CD4-positive, alpha-beta T cell (primary cell): ENCODE measurements at regions of chr21 and their contacts with region 1.

Region 1: GRCh38 chr21:34974162-34974981 is 74.7 kb downstream of the RUNX1 start:
- DNase-seq: peak in 11 of 14 experiments; percentile 18 to 87 (median 38)
- ATAC-seq: peak; percentile 85
- H3K4me3 ChIP-seq: peak overlapping the region; percentile 25
- H3K4me3 Mint-ChIP-seq: peak overlapping the region; percentile 88
- H3K27ac ChIP-seq: peak overlapping the region; percentile 29 to 36
- H3K27ac Mint-ChIP-seq: peak overlapping the region; percentile 92
- H3K4me1 ChIP-seq: peaks cover 47% of the 10 kb centered on the region
- H3K4me1 Mint-ChIP-seq: peaks cover 93% of the 10 kb centered on the region
- H3K27me3 ChIP-seq: no peaks in the 10 kb centered on the region
- H3K27me3 Mint-ChIP-seq: no peaks in the 10 kb centered on the region
- CTCF ChIP-seq: no peak

Region 2: DNA sequence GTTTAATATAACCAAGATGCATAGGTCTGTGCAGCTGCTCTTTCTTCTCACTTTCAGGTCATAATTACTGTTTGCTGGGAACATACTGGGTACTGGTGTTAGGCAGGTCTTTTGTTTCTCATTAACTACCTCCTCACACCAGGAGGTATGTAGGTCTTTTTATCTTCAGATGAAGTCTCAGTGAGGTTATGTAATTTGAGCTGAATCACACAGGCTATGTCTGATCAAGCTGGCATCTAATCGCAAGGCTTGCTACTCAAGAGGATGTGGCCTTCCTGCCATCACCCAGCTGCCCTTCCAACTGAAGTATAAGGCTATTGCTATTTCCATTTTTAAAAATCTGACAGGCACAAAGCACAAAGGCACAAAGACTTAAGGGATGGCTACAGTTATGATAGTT is 21.7 kb before region 1 on chr21:
- CTCF ChIA-PET with region 1: no interaction called
- POLR2A ChIA-PET with region 1: interaction called, 11 read pairs
- intact Hi-C with region 1: loop called in 1 of 2 experiments (anchors 2 kb)
- DNase-seq: peak in 1 of 14 experiments; percentile 32
- ATAC-seq: peak; percentile 44
- H3K4me3 ChIP-seq: no peak overlapping the region
- H3K4me3 Mint-ChIP-seq: peak overlapping the region; percentile 55
- H3K27ac ChIP-seq: no peak overlapping the region
- H3K27ac Mint-ChIP-seq: peak overlapping the region; percentile 80
- H3K4me1 ChIP-seq: peaks cover 51% of the 10 kb centered on the region
- H3K4me1 Mint-ChIP-seq: peaks cover 78% of the 10 kb centered on the region
- H3K27me3 ChIP-seq: no peaks in the 10 kb centered on the region
- H3K27me3 Mint-ChIP-seq: no peaks in the 10 kb centered on the region
- CTCF ChIP-seq: no peak

Region 3: DNA sequence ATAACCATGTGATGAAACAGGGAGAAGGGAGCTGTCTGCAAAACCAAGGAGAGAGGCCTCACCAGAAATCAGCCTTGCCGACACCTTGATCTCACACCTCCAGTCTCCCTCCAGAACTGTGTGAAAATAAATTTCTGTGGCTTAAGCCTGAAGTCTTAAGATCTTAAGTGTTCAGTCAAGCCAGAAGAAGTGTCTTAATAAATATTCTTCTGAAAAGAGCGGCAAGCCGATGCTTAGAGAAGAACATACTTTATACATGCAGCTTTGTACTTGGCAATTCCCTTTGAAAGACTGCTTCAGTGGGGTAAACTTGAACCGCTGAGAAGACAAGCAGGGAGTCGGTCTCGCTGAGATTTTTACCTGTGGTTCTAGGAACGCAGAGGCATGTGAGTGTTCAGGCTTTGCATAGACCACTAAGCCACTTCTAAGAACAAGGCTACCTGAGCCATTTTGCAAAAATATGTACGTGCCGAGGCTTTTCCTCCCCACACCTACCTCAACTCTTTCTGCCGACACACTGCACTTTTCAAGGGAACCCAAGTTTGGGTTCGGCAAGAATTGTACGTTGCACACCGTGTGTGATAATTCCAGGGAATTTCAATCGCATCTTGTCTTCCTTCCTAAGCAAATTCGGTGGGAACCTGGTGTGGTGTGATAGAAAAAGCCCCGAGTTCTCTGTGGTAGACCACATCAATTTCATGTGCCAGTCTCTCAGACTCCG is 71.3 kb after region 1 on chr21:
- CTCF ChIA-PET with region 1: interaction called, 5 read pairs
- POLR2A ChIA-PET with region 1: interaction called, 13 read pairs
- intact Hi-C with region 1: loop called (anchors 5 kb)
- DNase-seq: peak in 12 of 14 experiments; percentile 29 to 91 (median 50)
- ATAC-seq: peak; percentile 40
- H3K4me3 ChIP-seq: peak overlapping the region; percentile 91
- H3K4me3 Mint-ChIP-seq: peak overlapping the region; percentile 96
- H3K27ac ChIP-seq: peak overlapping the region; percentile 74 to 93
- H3K27ac Mint-ChIP-seq: peak overlapping the region; percentile 97
- H3K4me1 ChIP-seq: peaks cover 67% of the 10 kb centered on the region
- H3K4me1 Mint-ChIP-seq: peaks cover 91% of the 10 kb centered on the region
- H3K27me3 ChIP-seq: no peaks in the 10 kb centered on the region
- H3K27me3 Mint-ChIP-seq: no peaks in the 10 kb centered on the region
- CTCF ChIP-seq: no peak